Activated CD8-positive, alpha-beta T cell treated with anti-CD3 and anti-CD28 coated beads for 36 hours (primary cell): ENCODE measurements at regions of chr1 and their contacts with region 1.

Region 1: DNA sequence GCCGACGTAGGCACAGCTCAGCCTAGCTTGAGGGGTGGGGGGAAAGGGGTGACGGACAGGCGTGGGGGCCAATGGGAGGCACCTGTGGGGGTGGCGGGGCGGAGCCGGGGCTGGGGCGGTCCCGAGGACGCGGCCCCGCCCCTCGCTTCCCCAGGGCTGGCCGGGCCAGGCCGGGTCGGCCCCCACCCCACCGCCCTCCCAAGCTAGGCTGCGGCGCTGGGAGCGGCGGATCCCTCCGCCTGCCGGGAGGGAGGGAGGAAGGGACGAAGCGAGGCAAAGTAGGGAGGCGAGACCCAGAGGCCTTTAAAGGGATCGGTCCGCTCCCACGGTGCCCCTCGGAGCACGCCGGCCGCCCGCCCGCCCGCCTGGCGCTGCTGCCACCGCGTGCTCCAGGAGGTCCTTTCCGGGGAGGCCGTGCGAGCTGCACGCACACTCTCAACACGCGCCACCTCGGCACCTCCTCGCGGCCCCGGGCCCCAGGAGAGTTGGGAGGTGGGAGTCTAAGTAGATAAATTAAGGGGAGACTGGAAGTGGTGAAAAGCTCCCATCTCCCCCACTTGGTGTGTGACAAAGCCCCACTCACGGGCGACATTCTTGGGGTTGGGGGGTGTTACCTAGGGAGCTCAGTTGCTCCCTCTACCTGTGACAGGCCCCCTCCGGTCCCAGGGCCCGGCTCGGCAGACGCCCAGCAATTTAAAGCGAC is 373 bp upstream of the MEF2D start:
- DNase-seq: peak; percentile 94
- ATAC-seq: peak; percentile 71
- H3K4me3 Mint-ChIP-seq: peak overlapping the region; percentile 79
- H3K27ac Mint-ChIP-seq: peak overlapping the region; percentile 95
- H3K4me1 Mint-ChIP-seq: peaks cover 74% of the 10 kb centered on the region
- H3K27me3 Mint-ChIP-seq: no peaks in the 10 kb centered on the region
- CTCF ChIP-seq: peak; percentile 55

Region 2: DNA sequence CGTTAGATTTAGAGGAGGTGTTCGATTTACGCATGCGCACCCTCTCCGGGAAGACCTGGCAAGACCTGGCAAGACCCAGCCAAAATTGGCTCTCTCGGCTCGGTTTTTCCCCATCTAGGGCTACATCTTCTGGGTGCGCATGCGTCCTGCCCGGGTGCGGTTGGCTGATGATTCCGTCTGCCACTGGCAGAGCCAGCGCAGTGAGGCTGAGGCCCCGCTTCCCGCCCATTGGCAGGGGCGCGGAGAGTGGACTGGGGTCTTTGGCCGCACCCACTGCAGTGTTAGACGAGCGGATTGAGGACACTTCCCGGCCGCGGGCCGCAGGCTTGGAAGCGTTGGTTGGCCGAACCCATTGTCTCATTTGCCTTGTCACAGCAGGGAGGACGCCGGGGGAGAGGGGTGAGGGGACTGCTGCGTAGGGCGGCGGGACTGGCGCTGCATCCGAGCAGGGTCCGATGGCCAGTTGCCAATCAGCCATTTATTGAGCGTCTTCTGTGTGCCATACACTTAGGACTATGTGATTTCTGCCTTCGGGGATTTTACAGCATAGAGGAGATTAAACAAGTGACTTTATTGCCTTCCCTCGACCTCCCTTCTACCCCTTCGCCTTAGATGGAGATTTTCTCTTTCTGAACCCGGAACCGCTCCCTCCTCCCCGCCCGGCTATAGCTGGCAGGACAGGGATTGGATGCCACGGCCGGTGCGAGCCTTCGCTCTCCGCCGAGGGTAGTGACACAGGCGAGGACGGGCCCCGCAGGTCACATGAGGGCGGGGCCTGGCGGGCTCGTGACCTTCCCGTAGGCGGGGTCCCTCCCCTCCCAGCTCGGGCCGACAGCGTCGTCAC is 44.1 kb before region 1 on chr1:
- CTCF ChIA-PET with region 1: interaction called, 9 read pairs
- POLR2A ChIA-PET with region 1: interaction called, 12 read pairs
- intact Hi-C with region 1: loop called (anchors 5 kb)
- DNase-seq: peak; percentile 99
- ATAC-seq: peak; percentile 90
- H3K4me3 Mint-ChIP-seq: peak overlapping the region; percentile 91
- H3K27ac Mint-ChIP-seq: peak overlapping the region; percentile 99
- H3K4me1 Mint-ChIP-seq: peaks cover 19% of the 10 kb centered on the region
- H3K27me3 Mint-ChIP-seq: no peaks in the 10 kb centered on the region
- CTCF ChIP-seq: peak; percentile 1

Region 3: GRCh38 chr1:156524481-156524869 is 23.5 kb after region 1 on chr1:
- CTCF ChIA-PET with region 1: interaction called, 14 read pairs
- POLR2A ChIA-PET with region 1: interaction called, 13 read pairs
- intact Hi-C with region 1: no loop called
- DNase-seq: peak; percentile 70
- ATAC-seq: peak; percentile 93
- H3K4me3 Mint-ChIP-seq: peak overlapping the region; percentile 40
- H3K27ac Mint-ChIP-seq: peak overlapping the region; percentile 75
- H3K4me1 Mint-ChIP-seq: peaks cover 43% of the 10 kb centered on the region
- H3K27me3 Mint-ChIP-seq: no peaks in the 10 kb centered on the region
- CTCF ChIP-seq: no peak

Region 4: DNA sequence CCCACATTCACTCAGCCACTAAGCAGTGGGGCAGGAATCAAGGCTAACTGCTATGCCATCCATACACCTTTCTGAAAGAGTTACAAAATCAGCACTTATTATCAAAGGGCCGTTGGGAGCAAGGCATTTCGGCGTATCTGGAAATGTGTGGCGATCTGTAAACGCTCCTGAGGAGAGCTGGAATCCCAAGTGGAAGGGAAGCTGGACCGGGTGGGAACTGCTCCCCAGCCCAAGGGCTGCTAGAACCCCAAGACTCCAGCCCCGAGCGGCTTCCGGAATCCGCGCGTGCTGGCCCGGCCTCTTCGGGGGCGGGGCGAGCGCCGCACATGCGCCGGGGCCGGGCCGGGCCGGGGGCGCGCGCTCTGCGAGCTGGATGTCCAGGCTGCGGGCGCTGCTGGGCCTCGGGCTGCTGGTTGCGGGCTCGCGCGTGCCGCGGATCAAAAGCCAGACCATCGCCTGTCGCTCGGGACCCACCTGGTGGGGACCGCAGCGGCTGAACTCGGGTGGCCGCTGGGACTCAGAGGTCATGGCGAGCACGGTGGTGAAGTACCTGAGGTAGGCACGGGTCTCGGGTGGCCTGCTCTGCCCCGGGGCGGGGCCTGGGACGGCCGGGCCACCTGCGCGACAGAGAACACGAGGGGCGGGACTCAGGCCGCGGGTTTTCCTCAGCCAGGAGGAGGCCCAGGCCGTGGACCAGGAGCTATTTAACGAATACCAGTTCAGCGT is 90.6 kb after region 1 on chr1 and contains the start of gene NAXE:
- CTCF ChIA-PET with region 1: interaction called, 6 read pairs
- POLR2A ChIA-PET with region 1: interaction called, 14 read pairs
- intact Hi-C with region 1: no loop called
- DNase-seq: peak; percentile 73
- ATAC-seq: peak; percentile 92
- H3K4me3 Mint-ChIP-seq: peak within 1 kb of the TSS; percentile 77
- H3K27ac Mint-ChIP-seq: peak within 1 kb of the TSS; percentile 87
- H3K4me1 Mint-ChIP-seq: peaks cover 30% of the 10 kb centered on the region
- H3K27me3 Mint-ChIP-seq: no peaks in the 10 kb centered on the region
- CTCF ChIP-seq: no peak
- total RNA-seq, gene NAXE: 65.4 to 68.6 TPM

Region 5: DNA sequence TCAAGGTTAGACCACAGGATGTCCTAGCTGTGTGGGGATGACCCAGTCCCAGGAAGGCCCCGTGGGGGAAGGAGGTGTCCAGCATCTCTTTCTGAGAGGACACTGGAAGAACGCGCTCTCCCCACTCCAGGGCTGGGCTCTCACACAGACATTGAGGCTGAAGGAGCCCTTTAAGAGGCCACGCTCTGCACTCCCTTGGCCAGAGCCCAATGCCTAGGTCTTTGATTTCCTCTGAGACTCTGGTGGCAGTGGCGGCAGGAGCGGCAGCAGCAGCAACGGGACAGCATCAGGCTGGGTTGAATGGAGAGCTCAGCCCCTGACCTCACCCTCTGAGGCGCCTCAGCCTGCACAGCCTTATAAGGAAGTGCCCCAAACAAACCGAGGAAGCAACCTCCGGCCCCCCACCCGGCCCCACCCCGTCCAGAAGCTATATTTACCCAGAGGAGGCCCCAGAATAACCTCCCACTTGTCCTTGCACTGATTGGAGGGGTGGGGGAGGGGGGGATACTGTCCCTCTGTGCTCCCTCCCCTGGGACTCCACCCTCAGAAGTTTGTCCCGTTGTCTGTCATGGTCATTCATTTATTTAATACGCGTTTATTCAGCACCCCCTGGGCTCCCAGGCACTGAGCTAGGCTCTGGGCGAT is 163.9 kb after region 1 on chr1:
- CTCF ChIA-PET with region 1: no interaction called
- POLR2A ChIA-PET with region 1: no interaction called
- intact Hi-C with region 1: no loop called
- DNase-seq: no peak
- ATAC-seq: no peak
- H3K4me3 Mint-ChIP-seq: no peak overlapping the region
- H3K27ac Mint-ChIP-seq: no peak overlapping the region
- H3K4me1 Mint-ChIP-seq: peaks cover 21% of the 10 kb centered on the region
- H3K27me3 Mint-ChIP-seq: peaks cover 3% of the 10 kb centered on the region
- CTCF ChIP-seq: no peak

Region 6: DNA sequence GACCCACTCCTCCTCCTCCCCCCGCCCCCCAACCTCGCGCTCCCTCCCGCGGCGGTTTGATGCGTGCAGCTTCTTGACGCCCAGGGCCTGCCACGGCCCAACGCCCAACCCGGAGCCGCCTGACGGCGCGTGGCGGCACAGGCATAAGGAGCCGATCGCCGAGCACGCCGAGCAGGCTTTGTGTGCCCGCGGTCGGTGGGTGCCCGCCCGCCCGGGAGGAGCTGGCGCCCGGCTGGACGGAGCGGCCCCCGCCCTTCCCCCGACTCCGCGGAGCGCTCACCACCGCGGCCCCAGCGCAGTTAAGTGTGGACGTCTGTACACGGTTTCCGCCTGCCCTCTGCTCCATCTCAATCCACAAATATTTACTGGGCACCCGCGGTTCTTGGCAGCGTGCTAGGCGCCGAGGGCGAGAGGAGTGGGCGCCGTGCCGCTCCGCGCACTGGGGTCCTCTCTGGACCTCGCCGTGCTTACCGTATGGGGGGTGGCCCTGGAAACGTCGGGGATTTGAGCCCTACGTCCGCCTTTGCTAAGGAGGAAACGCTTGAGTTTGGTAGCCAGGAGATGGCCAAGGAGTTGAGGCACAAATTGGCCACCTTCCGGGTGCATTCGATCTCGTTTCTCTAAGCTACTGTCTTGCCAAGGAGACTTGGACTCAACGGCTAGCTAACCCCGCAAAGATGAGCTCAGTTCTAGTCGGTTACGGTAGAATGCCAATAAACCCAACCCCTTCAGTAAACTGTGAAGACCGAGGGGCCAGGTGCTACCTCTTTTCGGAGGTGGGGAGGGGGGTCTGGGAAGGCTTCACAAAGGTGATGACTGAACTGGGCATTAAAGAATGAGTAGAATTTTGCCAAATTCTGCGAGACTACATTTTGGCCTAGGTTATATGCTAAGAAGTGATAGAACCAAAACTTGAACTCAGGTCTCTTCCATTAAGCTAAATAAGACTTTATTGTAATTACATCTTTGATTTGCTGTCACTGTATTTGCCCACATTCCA is 251.1 kb after region 1 on chr1:
- CTCF ChIA-PET with region 1: no interaction called
- POLR2A ChIA-PET with region 1: no interaction called
- intact Hi-C with region 1: loop called (anchors 10 kb)
- DNase-seq: peak; percentile 97
- ATAC-seq: peak; percentile 83
- H3K4me3 Mint-ChIP-seq: peak overlapping the region; percentile 92
- H3K27ac Mint-ChIP-seq: peak overlapping the region; percentile 95
- H3K4me1 Mint-ChIP-seq: peaks cover 26% of the 10 kb centered on the region
- H3K27me3 Mint-ChIP-seq: no peaks in the 10 kb centered on the region
- CTCF ChIP-seq: no peak